ENCODE measurements at regions of chr11 and their contacts with region 1.

Region 1: GRCh38 chr11:130002846-130003716 is 446 bp upstream of the PRDM10 start:
- DNase-seq: peak; percentile 94 to 97 (median 97)
- ATAC-seq: peak; percentile 94 to 95
- H3K4me3 ChIP-seq: peak overlapping the region; percentile 88
- H3K27ac ChIP-seq: peak overlapping the region; percentile 90
- H3K4me1 ChIP-seq: no peaks in the 10 kb centered on the region
- H3K27me3 ChIP-seq: no peaks in the 10 kb centered on the region

Region 2: GRCh38 chr11:130069684-130070108 is 66.6 kb after region 1 on chr11 and contains the start of gene APLP2:
- intact Hi-C with region 1: loop called in 2 of 4 experiments (anchors 5 kb)
- DNase-seq: peak; percentile 100
- ATAC-seq: peak; percentile 96 to 97
- H3K4me3 ChIP-seq: peak within 1 kb of the TSS; percentile 88
- H3K27ac ChIP-seq: peak within 1 kb of the TSS; percentile 100
- H3K4me1 ChIP-seq: no peaks in the 10 kb centered on the region
- H3K27me3 ChIP-seq: no peaks in the 10 kb centered on the region
- total RNA-seq, gene APLP2: 311 to 375 (median 344) TPM

Region 3: DNA sequence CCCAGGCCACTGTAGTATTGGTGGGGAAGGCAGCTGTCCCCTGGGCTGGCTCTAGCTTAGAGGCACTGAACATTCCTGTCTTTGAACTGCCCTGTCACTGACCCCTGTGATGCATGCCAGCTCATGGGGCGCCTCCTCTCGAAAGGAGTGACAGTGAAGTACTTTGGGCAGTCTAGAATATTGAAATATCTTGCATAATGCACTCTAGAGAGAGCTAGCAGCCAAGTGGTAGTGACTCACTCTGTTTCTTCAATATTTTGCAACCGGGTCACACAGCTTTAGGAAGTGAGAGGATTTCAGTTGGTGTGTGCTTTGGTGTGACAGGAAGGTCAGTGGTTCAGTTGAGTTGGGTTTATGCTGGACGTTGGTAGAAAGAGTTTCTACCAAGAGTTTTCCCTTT is 121.0 kb after region 1 on chr11:
- intact Hi-C with region 1: loop called in 1 of 4 experiments (anchors 10 kb)
- DNase-seq: peak; percentile 85 to 89 (median 87)
- ATAC-seq: peak; percentile 95 to 96
- H3K4me3 ChIP-seq: no peak overlapping the region
- H3K27ac ChIP-seq: peak overlapping the region; percentile 52
- H3K4me1 ChIP-seq: peaks cover 5% of the 10 kb centered on the region
- H3K27me3 ChIP-seq: no peaks in the 10 kb centered on the region

Region 4: DNA sequence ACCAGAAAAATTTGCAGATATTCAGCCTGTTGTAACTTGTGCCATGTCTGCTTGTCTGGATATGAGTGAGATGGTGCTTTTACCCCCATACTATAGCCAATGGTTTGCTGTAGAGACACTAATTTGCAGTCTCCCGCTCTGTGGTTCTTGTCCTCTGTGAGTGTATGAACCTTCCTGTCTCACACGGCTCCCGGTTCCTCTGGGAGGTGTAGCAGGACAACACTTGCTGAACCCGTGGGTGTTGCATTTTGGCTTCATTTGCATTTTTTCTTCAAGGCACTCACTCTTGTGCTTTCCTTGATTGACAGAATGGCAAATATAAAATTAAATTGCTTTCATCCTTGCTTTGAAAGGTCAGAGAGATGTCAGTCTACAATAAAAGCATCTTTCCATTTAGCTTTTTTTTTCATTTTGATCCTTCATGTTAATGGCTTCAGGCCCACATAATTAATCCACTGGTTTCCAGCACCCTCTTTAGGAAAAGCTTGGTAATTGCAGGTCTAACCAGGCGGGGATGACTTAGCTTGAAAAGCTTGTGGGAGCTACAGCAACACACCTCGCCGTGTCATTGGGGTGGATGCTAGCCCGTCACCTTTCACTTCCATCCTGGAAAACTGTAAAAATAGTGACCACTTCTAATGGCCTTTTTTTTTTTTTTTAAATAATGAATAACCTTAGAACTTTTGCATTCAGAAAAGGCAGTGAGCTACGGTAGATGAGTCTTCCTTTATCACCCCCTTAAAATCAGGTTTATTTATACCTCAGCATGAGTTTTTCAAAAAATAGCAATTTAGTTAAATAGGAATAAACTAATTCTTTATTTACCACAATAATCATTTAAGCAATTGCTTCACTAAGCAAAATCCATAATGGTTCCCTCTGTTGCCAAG is 129.1 kb after region 1 on chr11:
- intact Hi-C with region 1: loop called in 2 of 4 experiments (anchors 10 kb)
- DNase-seq: no peak
- ATAC-seq: peak; percentile 62 to 72
- H3K4me3 ChIP-seq: no peak overlapping the region
- H3K27ac ChIP-seq: no peak overlapping the region
- H3K4me1 ChIP-seq: no peaks in the 10 kb centered on the region
- H3K27me3 ChIP-seq: no peaks in the 10 kb centered on the region

Region 5: DNA sequence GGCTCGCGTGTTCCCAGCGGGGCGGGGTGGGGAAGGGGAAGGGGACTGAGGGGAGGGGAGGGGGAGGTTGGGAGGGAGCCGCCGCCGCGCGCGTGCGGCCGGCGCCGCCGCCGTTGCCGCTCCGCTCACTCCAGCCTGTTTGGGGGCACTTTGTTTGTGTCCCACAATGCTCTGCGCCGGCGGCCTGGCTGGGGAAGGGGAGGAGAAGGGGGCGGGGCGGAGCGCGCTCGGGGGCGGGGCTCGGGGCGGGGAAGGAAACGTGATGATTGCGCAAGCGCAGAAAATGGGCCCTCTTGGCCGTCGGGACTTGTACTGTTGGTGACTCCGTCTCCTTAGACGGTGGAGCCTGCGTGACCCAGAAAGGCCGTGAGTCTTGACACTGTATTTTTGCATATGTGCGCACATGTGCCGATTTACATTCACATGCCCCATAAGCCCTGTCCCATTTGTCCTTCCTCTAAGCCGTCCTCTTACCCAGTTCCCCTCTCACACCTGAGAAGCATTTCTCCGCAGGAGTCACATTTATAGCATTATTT is 311.7 kb after region 1 on chr11 and contains the start of gene ZBTB44:
- intact Hi-C with region 1: loop called in 1 of 4 experiments (anchors 10 kb)
- DNase-seq: peak; percentile 94 to 96 (median 96)
- ATAC-seq: peak; percentile 98 to 99
- H3K4me3 ChIP-seq: peak within 1 kb of the TSS; percentile 82
- H3K27ac ChIP-seq: peak within 1 kb of the TSS; percentile 99
- H3K4me1 ChIP-seq: peaks cover 2% of the 10 kb centered on the region
- H3K27me3 ChIP-seq: no peaks in the 10 kb centered on the region
- total RNA-seq, gene ZBTB44: 42.9 to 47.0 (median 46.2) TPM

Measured in right cardiac atrium (tissue), 5 donors.